HCT116 (cell line): ENCODE measurements at regions of chr5 and their contacts with region 1.

Region 1: GRCh38 chr5:57338068-57338892 is 144.3 kb downstream of the ACTBL2 start:
- DNase-seq: peak; percentile 44
- ATAC-seq: peak; percentile 97
- H3K4me3 ChIP-seq: no peak overlapping the region
- H3K27ac ChIP-seq: no peak overlapping the region
- H3K4me1 ChIP-seq: peaks cover 6 to 26% of the 10 kb centered on the region in 2 experiments; a peak in 3 of 4 replicates
- H3K27me3 ChIP-seq: no peaks in the 10 kb centered on the region
- CTCF ChIP-seq: peak; percentile 48 to 78 (median 73)
- POLR2A ChIP-seq: no peak
- RAD21 ChIP-seq: peak; percentile 73

Region 2: GRCh38 chr5:57327561-57328394 is 10.5 kb before region 1 on chr5:
- CTCF ChIA-PET with region 1: interaction called, 10 read pairs
- POLR2A ChIA-PET with region 1: no interaction called
- RAD21 ChIA-PET with region 1: no interaction called
- intact Hi-C with region 1: no loop called
- DNase-seq: peak; percentile 60
- ATAC-seq: peak; percentile 91
- H3K4me3 ChIP-seq: no peak overlapping the region
- H3K27ac ChIP-seq: peak overlapping the region; percentile 32
- H3K4me1 ChIP-seq: peaks cover 0 to 25% of the 10 kb centered on the region in 2 experiments; a peak in 2 of 4 replicates
- H3K27me3 ChIP-seq: no peaks in the 10 kb centered on the region
- CTCF ChIP-seq: no peak
- POLR2A ChIP-seq: no peak
- RAD21 ChIP-seq: no peak

Region 3: DNA sequence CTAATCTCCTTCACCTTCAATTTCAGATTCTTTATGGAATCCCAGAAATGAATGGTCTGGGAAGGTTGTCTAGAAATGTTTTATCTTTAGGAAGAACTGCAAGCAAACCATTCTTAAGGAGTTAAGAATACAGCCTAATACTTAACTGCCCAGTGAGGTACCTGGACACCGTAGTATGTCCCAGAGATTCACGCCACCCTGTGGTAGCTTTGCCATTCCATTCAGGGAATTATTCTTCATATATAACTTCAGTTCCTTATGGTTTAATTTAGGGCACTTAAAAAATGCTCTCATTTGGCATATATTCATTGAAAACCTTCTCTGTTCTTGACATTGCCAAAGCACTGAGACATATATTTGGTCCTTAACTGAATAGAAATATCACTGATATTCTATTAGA is 94.6 kb after region 1 on chr5:
- CTCF ChIA-PET with region 1: interaction called, 3 read pairs
- POLR2A ChIA-PET with region 1: no interaction called
- RAD21 ChIA-PET with region 1: no interaction called
- intact Hi-C with region 1: loop called (anchors 1 kb)
- DNase-seq: peak; percentile 23
- ATAC-seq: peak; percentile 67; the same call in 1 of the 2 replicates
- H3K4me3 ChIP-seq: no peak overlapping the region
- H3K27ac ChIP-seq: no peak overlapping the region
- H3K4me1 ChIP-seq: peaks cover 14 to 21% of the 10 kb centered on the region in 2 experiments; a peak in 3 of 4 replicates
- H3K27me3 ChIP-seq: no peaks in the 10 kb centered on the region
- CTCF ChIP-seq: peak; percentile 47 to 58 (median 52); a peak in 5 of 6 replicates
- POLR2A ChIP-seq: no peak
- RAD21 ChIP-seq: peak; percentile 68